ENCODE measurements at regions of chr12 and their contacts with region 1.

Region 1: DNA sequence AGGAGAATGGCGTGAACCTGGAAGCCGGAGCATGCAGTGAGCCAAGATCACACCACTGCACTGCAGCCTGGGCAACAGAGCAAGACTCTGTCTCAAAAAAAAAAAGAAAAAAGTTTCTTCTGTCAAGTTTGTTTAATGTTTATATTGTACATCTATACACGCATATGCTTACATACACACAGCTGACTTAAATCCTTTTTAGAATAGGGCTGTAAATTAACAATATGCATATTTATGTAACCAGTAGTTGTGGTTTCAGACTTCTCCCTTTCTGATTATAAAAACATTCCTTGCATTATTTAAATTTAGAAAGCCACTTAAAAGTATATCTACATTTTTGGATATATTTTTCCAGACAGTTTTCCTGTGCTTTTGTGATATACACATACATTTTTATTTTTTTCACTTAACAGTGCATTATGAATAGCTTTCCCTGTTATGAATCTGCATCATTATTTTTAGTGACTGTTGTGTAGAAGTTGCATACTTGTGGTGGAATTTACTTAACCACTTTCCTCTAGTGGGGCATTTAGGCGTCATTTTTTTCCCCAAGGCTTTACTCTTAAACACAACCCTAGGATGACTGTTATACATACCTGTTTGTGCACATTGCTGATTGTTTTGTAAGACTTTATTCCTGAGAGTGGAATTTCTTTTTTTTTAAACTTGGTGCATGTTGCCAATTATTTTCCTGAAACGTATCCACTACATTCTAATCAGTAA is 29.4 kb downstream of the POLR3B start:
- DNase-seq: no peak
- H3K4me3 ChIP-seq: no peak overlapping the region
- H3K27ac ChIP-seq: no peak overlapping the region
- H3K4me1 ChIP-seq: no peaks in the 10 kb centered on the region
- H3K27me3 ChIP-seq: no peaks in the 10 kb centered on the region
- CTCF ChIP-seq: no peak

Region 2: DNA sequence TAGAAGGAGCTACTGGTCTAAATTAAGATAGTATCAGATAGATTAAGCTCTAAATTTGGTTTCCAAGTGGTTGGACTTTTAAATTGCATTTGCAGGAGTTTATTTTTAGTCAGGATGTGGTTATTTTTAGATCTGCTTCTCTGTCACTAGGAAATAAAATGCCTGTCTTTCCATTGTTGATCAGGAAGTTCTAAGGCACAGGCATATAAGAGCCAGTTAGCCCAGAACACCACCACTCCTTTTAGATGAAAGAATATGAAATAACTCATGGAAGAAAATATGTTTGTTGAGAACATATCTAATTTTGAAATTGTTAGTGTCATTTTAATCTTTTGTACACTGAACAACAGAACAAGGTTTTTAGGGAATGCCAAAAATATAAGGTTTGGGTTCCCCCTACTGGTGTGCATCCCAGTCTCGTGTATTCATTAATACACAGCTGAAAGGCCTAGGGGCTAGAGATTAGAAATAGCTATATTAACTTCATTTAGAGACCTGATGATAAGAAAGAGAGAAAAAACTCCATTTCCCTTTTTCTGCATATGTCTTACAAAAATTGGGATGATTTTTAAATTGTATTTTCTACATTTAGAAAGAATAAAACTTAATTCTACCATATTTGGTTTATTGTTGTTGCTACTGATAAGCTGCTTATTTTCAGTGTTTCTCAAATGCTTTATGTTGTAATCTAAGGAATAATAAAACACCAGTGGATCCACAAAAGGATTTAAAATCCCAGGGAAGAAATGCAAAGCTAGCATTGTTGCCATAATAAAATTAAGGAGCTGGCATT is 454.7 kb after region 1 on chr12:
- CTCF ChIA-PET with region 1: no interaction called
- POLR2A ChIA-PET with region 1: no interaction called
- intact Hi-C with region 1: loop called (anchors 1 kb)
- DNase-seq: peak; percentile 73
- H3K4me3 ChIP-seq: no peak overlapping the region
- H3K27ac ChIP-seq: peak overlapping the region; percentile 67
- H3K4me1 ChIP-seq: peaks cover 28% of the 10 kb centered on the region
- H3K27me3 ChIP-seq: no peaks in the 10 kb centered on the region
- CTCF ChIP-seq: peak; percentile 86

Region 3: DNA sequence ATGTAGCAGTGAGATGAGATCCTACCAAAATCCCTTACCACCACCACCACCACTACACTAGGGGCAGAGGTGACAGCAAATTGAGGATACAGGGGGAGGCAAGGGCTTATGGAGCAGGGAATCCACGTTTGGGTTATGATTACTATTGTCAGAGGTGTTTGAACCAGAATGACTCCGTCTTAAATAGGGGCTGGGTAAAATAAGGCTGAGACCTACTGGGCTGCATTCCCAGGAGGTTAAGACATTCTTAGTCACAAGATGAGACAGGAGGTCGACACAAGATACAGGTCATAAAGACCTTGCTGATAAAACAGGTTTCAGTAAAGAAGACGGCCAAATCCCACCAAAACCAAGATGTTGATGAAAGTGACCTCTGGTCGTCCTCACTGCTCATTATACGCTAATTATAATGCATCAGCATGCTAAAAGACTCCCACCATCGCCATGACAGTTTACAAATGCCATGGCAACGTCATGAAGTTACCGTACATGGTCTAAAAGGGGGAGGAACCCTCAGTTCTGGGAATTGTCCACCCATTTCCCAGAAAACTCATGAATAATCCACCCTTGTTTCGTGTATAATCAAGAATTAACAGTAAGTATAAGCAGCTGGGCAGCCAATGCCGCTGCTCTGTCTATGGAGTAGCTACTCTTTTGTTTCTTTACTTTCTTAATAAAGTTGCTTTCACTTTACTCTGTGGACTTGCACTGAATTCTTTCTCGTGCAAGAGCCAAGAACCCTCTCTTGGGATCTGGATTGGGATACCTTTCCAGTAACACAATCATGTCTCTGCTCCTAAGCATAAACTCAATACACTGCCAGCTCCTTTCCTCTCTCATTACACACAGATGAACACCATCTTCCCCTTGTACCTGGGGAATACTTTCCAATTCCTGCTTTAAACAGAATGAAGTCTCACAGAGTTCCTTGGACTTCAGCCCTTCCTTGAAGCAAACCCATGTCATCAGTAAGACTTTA is 723.1 kb after region 1 on chr12:
- CTCF ChIA-PET with region 1: no interaction called
- POLR2A ChIA-PET with region 1: no interaction called
- intact Hi-C with region 1: loop called (anchors 10 kb)
- DNase-seq: peak; percentile 9
- H3K4me3 ChIP-seq: peak overlapping the region; percentile 12
- H3K27ac ChIP-seq: no peak overlapping the region
- H3K4me1 ChIP-seq: peaks cover 7% of the 10 kb centered on the region
- H3K27me3 ChIP-seq: no peaks in the 10 kb centered on the region
- CTCF ChIP-seq: no peak

Region 4: GRCh38 chr12:107607464-107608392 is 1220.8 kb after region 1 on chr12:
- CTCF ChIA-PET with region 1: no interaction called
- POLR2A ChIA-PET with region 1: no interaction called
- intact Hi-C with region 1: loop called (anchors 10 kb)
- DNase-seq: peak; percentile 85
- H3K4me3 ChIP-seq: no peak overlapping the region
- H3K27ac ChIP-seq: no peak overlapping the region
- H3K4me1 ChIP-seq: no peaks in the 10 kb centered on the region
- H3K27me3 ChIP-seq: no peaks in the 10 kb centered on the region
- CTCF ChIP-seq: peak; percentile 92